Uterus (tissue), 4 donors: ENCODE measurements at regions of chr1 and their contacts with region 1.

Region 1: DNA sequence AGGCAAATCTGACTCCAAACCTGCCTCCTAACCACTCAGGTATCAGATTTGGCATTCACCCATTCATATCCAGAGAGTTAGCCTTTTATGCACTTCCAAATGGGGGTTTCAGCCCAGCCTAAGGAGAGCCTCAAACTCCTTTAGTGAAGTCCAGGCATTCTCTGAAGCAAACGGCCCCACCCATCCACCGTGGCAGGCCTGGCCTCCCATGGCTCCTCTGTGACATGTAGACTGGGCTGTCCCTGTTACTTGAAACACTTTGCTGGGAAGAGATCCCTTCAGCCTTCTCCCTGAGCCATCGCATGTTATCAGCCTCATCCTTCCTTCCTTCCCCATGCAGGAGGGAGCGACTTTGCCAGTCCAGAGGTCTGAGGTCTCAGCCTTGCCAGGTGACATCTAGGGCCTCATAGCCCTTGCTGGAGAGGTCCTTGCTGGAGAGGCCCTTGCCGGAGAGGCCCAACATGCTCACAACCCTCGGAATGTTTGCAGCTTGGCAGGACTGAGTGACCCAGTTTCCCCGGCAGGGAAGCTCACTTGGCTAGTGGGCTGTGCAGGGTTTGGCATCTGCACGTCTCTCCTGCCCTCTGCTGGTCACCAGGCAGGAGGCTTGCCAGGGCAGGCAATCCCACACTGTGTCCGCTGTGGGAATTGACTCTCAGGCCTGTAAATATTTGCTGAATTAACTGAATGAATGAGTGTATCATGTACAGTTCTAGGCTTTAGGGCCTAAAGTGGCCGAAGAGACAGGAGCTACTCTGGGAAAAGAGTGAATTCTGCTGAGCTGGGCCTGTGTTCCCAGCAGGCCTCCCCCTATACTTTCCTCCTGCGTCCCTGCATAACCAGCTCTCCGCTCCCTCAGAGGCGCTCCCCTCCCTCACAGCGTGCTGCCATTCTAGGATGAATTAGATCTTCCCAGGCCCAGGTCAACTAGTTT is 26.7 kb upstream of the RBM15 start:
- DNase-seq: peak; percentile 66 to 77
- H3K4me3 ChIP-seq: no peak overlapping the region
- H3K27ac ChIP-seq: no peak overlapping the region
- H3K4me1 ChIP-seq: no peaks in the 10 kb centered on the region
- H3K27me3 ChIP-seq: no peaks in the 10 kb centered on the region
- CTCF ChIP-seq: peak; percentile 78 to 93 (median 90)
- POLR2A ChIP-seq: no peak

Region 2: DNA sequence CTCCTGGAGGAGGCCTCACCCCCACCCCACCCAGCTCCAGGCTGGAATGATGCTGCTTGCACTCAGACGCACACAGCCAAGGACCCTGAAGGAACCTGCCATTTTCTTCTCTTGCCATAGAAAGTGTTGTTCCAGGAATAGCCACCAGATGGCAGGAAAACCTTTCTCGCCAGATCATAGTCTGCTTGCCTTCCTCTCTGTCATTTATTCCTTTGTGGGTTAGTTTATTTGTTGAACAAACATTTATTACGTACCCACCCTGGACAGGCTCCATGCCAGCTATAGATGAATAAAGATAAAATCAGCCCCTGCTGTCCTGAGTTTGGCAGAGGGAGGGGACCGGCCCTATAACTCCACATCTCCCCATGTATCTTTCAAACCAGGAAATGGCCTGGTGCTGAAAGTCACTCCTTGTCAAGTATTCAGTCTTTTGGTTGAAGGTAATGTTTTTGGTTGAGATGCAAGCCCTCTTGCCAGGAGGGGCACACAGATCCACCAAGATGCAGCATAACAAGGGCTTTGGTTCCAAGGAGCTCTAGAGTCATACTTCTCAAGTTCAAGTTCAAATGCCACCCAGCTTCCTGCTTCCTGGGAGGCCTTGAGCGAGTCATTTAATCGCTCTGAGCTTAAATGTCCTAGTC is 109.3 kb before region 1 on chr1:
- intact Hi-C with region 1: loop called (anchors 2 kb)
- DNase-seq: peak; percentile 34 to 59
- H3K4me3 ChIP-seq: no peak overlapping the region
- H3K27ac ChIP-seq: no peak overlapping the region
- H3K4me1 ChIP-seq: no peaks in the 10 kb centered on the region
- H3K27me3 ChIP-seq: no peaks in the 10 kb centered on the region
- CTCF ChIP-seq: peak; percentile 77 to 88 (median 80)
- POLR2A ChIP-seq: no peak

Region 3: DNA sequence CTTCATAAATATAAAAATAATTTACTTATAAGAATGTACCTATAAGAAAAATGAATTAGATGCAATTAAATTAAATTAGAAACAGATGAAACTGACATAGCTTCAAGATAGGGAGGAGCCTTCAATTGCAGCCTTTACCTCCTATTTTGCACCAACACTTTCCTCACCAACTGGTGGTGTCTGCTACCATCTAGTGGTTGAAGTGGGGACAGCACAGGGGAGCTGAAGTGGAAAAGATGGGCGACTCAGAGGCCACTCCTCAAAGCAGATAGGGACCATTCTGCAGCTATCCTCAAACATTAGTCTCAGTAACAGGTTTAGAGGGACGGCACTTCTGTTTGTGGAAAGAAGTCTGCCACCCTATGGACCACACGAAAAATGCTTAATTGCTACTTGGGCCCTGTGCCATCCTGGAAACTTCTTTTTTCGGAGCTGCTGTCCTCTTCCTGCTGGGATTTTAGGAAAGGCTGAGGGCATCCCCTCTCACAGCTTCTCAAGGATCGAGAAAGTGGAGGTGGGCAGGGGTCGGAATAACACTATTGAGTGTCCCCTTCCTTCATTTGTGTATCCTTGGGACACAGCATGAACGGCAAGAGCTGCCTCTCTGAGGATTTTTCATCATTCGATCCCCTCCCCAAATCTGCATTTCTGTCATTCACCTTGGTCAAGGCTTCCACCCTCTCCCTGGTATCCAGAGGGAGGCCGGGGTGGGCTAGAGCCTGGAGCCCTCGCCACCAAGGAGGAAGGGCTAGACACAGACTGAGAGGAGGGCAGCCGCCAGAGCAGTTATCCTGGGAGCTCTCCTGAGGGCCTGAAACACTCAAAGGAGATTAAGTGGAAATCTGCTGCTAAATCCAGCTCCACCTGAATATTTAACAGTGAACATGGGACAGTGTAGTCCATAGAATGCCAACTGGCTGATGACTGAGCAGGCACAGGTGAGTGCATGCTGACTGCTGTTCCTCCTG is 148.1 kb after region 1 on chr1:
- intact Hi-C with region 1: loop called (anchors 10 kb)
- DNase-seq: peak; percentile 73 to 78
- H3K4me3 ChIP-seq: no peak overlapping the region
- H3K27ac ChIP-seq: no peak overlapping the region
- H3K4me1 ChIP-seq: no peaks in the 10 kb centered on the region
- H3K27me3 ChIP-seq: no peaks in the 10 kb centered on the region
- CTCF ChIP-seq: peak; percentile 91 to 96 (median 93)
- POLR2A ChIP-seq: no peak